ENCODE measurements at regions of chr11 and their contacts with region 1.

Region 1: GRCh38 chr11:37449146-37449545 is 851.1 kb upstream of the RAG2 start:
- DNase-seq: no peak
- ATAC-seq: peak; percentile 51 to 54 (median 51)
- H3K4me3 ChIP-seq: no peak overlapping the region
- H3K4me3 Mint-ChIP-seq: peak overlapping the region; percentile 79
- H3K27ac ChIP-seq: no peak overlapping the region
- H3K27ac Mint-ChIP-seq: peak overlapping the region in 1 of 2 donors; percentile 89
- H3K4me1 ChIP-seq: no peaks in the 10 kb centered on the region
- H3K4me1 Mint-ChIP-seq: peaks cover 38 to 48% of the 10 kb centered on the region in 2 donors
- H3K27me3 ChIP-seq: no peaks in the 10 kb centered on the region
- H3K27me3 Mint-ChIP-seq: no peaks in the 10 kb centered on the region
- CTCF ChIP-seq: peak; percentile 55

Region 2: DNA sequence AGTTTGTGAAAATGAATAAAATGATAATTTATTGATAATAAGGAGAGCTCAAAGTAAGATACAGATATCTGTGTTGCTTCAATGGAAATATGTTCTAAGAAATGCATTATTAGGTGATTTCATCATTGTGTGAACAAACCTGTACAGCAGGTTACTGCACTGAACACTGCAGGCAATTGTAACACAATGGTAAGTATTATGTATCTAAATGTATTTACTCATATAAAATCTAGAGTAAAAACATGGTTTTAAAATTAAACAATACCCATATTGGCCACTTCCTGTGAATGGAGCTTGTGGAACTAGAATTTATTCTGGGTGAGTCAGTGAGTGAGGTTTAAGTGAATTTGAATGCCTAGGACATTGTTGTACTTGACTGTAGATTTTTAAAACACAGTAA is 128.2 kb before region 1 on chr11:
- intact Hi-C with region 1: no loop called
- DNase-seq: no peak
- ATAC-seq: no peak
- H3K4me3 ChIP-seq: no peak overlapping the region
- H3K4me3 Mint-ChIP-seq: no peak overlapping the region
- H3K27ac ChIP-seq: no peak overlapping the region
- H3K27ac Mint-ChIP-seq: no peak overlapping the region
- H3K4me1 ChIP-seq: no peaks in the 10 kb centered on the region
- H3K4me1 Mint-ChIP-seq: no peaks in the 10 kb centered on the region
- H3K27me3 ChIP-seq: no peaks in the 10 kb centered on the region
- H3K27me3 Mint-ChIP-seq: no peaks in the 10 kb centered on the region
- CTCF ChIP-seq: no peak

Region 3: DNA sequence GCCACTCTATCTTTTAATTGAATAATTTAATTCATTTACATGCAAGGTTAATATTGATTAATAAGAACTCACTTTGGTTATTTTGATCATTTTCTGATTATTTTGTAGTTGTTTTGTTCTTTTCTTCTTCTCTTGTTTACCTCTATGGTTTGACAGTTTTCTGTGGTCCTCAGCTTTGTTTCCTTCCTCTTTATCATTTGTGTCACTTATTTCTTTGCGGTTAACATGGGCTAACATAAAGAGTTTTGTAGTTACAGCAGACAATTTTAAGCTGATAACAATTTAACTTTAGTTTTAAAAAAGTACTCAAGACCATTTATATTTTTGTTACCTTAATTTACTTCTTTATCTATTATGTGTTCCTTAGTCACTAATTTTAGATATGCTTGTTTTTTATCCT is 181.7 kb after region 1 on chr11:
- intact Hi-C with region 1: loop called (anchors 5 kb)
- DNase-seq: no peak
- ATAC-seq: peak in 2 of 3 donors; percentile 62 to 81
- H3K4me3 ChIP-seq: no peak overlapping the region
- H3K4me3 Mint-ChIP-seq: peak overlapping the region; percentile 85
- H3K27ac ChIP-seq: peak overlapping the region; percentile 42
- H3K27ac Mint-ChIP-seq: peak overlapping the region; percentile 72 to 88
- H3K4me1 ChIP-seq: peaks cover 6% of the 10 kb centered on the region
- H3K4me1 Mint-ChIP-seq: peaks cover 56 to 64% of the 10 kb centered on the region in 2 donors
- H3K27me3 ChIP-seq: no peaks in the 10 kb centered on the region
- H3K27me3 Mint-ChIP-seq: no peaks in the 10 kb centered on the region
- CTCF ChIP-seq: no peak

Region 4: GRCh38 chr11:38791302-38791961 is 1342.3 kb after region 1 on chr11:
- intact Hi-C with region 1: loop called (anchors 1 kb)
- DNase-seq: peak in 1 of 2 donors; percentile 9
- ATAC-seq: peak; percentile 71 to 85 (median 75)
- H3K4me3 ChIP-seq: no peak overlapping the region
- H3K4me3 Mint-ChIP-seq: no peak overlapping the region
- H3K27ac ChIP-seq: no peak overlapping the region
- H3K27ac Mint-ChIP-seq: no peak overlapping the region
- H3K4me1 ChIP-seq: no peaks in the 10 kb centered on the region
- H3K4me1 Mint-ChIP-seq: no peaks in the 10 kb centered on the region
- H3K27me3 ChIP-seq: no peaks in the 10 kb centered on the region
- H3K27me3 Mint-ChIP-seq: no peaks in the 10 kb centered on the region
- CTCF ChIP-seq: peak; percentile 80

Region 5: DNA sequence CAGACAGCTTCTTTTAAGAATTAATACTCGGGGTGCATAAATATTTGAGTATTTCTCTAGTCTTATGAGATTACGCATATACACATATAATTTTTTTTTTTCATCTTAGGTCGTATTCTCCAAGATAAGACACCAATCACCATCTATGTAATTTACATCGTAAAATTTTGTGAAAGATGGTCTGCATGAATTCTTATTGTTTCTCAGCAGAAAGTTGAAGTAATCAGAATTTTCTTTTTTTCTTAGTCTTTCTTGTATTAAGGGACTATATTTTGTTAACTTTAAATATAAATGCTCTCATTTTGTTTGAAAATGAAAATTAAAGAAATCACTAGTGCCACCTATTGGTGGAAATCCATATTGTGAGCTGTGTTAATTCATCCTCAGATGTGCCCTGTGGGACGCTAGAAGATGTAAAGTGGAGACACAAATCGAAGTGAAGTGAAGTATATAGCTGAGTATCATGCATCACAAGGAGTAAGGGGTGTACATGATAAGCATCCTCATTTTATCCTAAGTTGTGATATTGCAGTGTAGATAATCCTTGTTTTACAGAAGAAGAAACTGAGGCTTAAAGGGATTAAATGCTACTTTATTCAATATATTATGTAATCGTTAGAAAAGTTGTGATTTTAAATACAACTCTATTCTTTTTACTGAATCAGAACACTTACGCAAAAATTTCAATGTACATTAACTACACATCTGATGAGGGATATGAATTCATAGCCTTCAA is 1926.0 kb after region 1 on chr11:
- intact Hi-C with region 1: loop called (anchors 2 kb)
- DNase-seq: peak in 1 of 2 donors; percentile 63
- ATAC-seq: peak in 2 of 3 donors; percentile 50 to 64
- H3K4me3 ChIP-seq: no peak overlapping the region
- H3K4me3 Mint-ChIP-seq: no peak overlapping the region
- H3K27ac ChIP-seq: no peak overlapping the region
- H3K27ac Mint-ChIP-seq: no peak overlapping the region
- H3K4me1 ChIP-seq: no peaks in the 10 kb centered on the region
- H3K4me1 Mint-ChIP-seq: peaks cover 5 to 8% of the 10 kb centered on the region in 2 donors
- H3K27me3 ChIP-seq: no peaks in the 10 kb centered on the region
- H3K27me3 Mint-ChIP-seq: no peaks in the 10 kb centered on the region
- CTCF ChIP-seq: peak; percentile 77

Measured in natural killer cell (primary cell).